ENCODE measurements at regions of chr9 and their contacts with region 1.

Region 1: GRCh38 chr9:69190086-69190862 is 16.2 kb downstream of the TJP2 start:
- DNase-seq: no peak
- ATAC-seq: no peak
- H3K4me3 ChIP-seq: no peak overlapping the region
- H3K4me3 Mint-ChIP-seq: peak overlapping the region in 1 of 10 donors; percentile 10
- H3K27ac ChIP-seq: no peak overlapping the region
- H3K27ac Mint-ChIP-seq: peak overlapping the region in 2 of 9 donors; percentile 67 to 72
- H3K4me1 ChIP-seq: peaks cover 0 to 8% of the 10 kb centered on the region in 2 donors
- H3K4me1 Mint-ChIP-seq: peaks cover 7 to 55% (median 23%) of the 10 kb centered on the region in 7 donors
- H3K27me3 ChIP-seq: no peaks in the 10 kb centered on the region
- H3K27me3 Mint-ChIP-seq: no peaks in the 10 kb centered on the region

Region 2: DNA sequence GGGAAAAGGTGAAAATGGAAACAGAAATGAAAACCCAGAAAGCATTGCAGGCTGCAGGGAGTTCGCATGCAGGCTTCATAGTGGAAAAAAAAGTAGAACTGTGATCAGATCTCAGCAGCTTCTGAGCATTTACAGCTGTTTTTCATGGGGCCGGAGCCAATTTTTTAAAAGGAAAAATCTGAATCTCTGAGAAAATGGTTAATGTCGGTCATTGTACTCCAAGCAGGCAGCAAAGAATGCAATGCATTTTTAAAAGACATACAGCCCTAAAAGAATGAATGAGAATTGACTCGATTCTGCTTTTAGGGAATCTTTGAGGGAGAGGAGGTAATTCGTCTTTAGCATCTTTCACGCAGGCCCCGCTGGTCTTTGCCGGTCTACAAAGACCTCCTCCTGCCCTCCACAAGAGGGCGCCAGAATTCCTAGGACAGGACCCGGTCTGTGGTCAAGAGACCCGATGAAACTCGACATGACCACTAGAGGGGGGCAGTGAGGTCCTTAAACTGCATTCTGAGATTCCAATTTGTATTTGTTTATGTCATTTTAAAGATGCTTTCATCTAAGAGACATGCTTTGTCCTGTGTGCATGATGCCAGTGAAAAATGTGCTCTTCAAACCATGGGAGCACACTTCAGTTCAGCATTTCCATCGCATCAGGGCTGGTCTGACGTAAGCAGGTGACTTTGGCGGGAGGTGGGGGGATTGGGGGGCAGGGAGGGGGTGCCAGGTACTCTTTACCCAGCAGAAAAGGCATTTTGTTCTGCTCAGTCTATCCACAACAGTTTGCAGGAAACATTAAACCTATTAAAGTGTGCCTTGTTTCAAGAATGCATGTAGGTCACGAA is 605.9 kb before region 1 on chr9:
- CTCF ChIA-PET with region 1: interaction called, 3 read pairs
- POLR2A ChIA-PET with region 1: no interaction called
- intact Hi-C with region 1: loop called (anchors 1 kb)
- DNase-seq: peak; percentile 64 to 89 (median 80)
- ATAC-seq: peak; percentile 100
- H3K4me3 ChIP-seq: no peak overlapping the region
- H3K4me3 Mint-ChIP-seq: no peak overlapping the region
- H3K27ac ChIP-seq: no peak overlapping the region
- H3K27ac Mint-ChIP-seq: peak overlapping the region in 1 of 9 donors; percentile 63
- H3K4me1 ChIP-seq: no peaks in the 10 kb centered on the region
- H3K4me1 Mint-ChIP-seq: peaks cover 0 to 5% (median 0%) of the 10 kb centered on the region in 7 donors
- H3K27me3 ChIP-seq: no peaks in the 10 kb centered on the region
- H3K27me3 Mint-ChIP-seq: peaks cover 0 to 14% (median 10%) of the 10 kb centered on the region in 5 donors

Region 3: GRCh38 chr9:69035438-69036308 is 154.6 kb before region 1 on chr9 and contains the start of gene FXN:
- CTCF ChIA-PET with region 1: interaction called, 21 read pairs
- POLR2A ChIA-PET with region 1: no interaction called
- intact Hi-C with region 1: loop called (anchors 1 kb)
- DNase-seq: peak; percentile 60 to 89 (median 81)
- ATAC-seq: peak; percentile 95
- H3K4me3 ChIP-seq: peak within 1 kb of the TSS; percentile 72
- H3K4me3 Mint-ChIP-seq: peak within 1 kb of the TSS; percentile 91 to 99 (median 97)
- H3K27ac ChIP-seq: peak within 1 kb of the TSS; percentile 73
- H3K27ac Mint-ChIP-seq: peak within 1 kb of the TSS; percentile 88 to 95 (median 91)
- H3K4me1 ChIP-seq: peaks cover 9 to 16% of the 10 kb centered on the region in 2 donors
- H3K4me1 Mint-ChIP-seq: peaks cover 14 to 73% (median 38%) of the 10 kb centered on the region in 7 donors
- H3K27me3 ChIP-seq: no peaks in the 10 kb centered on the region
- H3K27me3 Mint-ChIP-seq: no peaks in the 10 kb centered on the region
- total RNA-seq, gene FXN: 16.7 to 28.3 (median 19.1) TPM

Region 4: GRCh38 chr9:69056191-69056815 is 134.0 kb before region 1 on chr9:
- CTCF ChIA-PET with region 1: interaction called, 64 read pairs
- POLR2A ChIA-PET with region 1: interaction called, 3 read pairs
- intact Hi-C with region 1: loop called in 1 of 2 experiments (anchors 1 kb)
- DNase-seq: no peak
- ATAC-seq: no peak
- H3K4me3 ChIP-seq: no peak overlapping the region
- H3K4me3 Mint-ChIP-seq: peak overlapping the region in 1 of 10 donors; percentile 16
- H3K27ac ChIP-seq: no peak overlapping the region
- H3K27ac Mint-ChIP-seq: peak overlapping the region in 1 of 9 donors; percentile 68
- H3K4me1 ChIP-seq: no peaks in the 10 kb centered on the region
- H3K4me1 Mint-ChIP-seq: peaks cover 0 to 25% (median 6%) of the 10 kb centered on the region in 7 donors
- H3K27me3 ChIP-seq: no peaks in the 10 kb centered on the region
- H3K27me3 Mint-ChIP-seq: no peaks in the 10 kb centered on the region

Region 5: GRCh38 chr9:69121828-69122548 is 68.3 kb before region 1 on chr9:
- CTCF ChIA-PET with region 1: no interaction called
- POLR2A ChIA-PET with region 1: no interaction called
- intact Hi-C with region 1: loop called (anchors 2 to 5 kb)
- DNase-seq: peak; percentile 36 to 68 (median 56)
- ATAC-seq: peak; percentile 82
- H3K4me3 ChIP-seq: peak overlapping the region; percentile 81
- H3K4me3 Mint-ChIP-seq: peak overlapping the region; percentile 94 to 98 (median 98)
- H3K27ac ChIP-seq: peak overlapping the region; percentile 49
- H3K27ac Mint-ChIP-seq: peak overlapping the region; percentile 72 to 95 (median 85)
- H3K4me1 ChIP-seq: peaks cover 0 to 7% of the 10 kb centered on the region in 2 donors
- H3K4me1 Mint-ChIP-seq: peaks cover 0 to 19% (median 11%) of the 10 kb centered on the region in 7 donors
- H3K27me3 ChIP-seq: no peaks in the 10 kb centered on the region
- H3K27me3 Mint-ChIP-seq: peaks cover 0 to 14% (median 0%) of the 10 kb centered on the region in 5 donors

Region 6: GRCh38 chr9:69155341-69156030 is 34.8 kb before region 1 on chr9:
- CTCF ChIA-PET with region 1: no interaction called
- POLR2A ChIA-PET with region 1: no interaction called
- intact Hi-C with region 1: loop called in 1 of 2 experiments (anchors 5 kb)
- DNase-seq: no peak
- ATAC-seq: no peak
- H3K4me3 ChIP-seq: no peak overlapping the region
- H3K4me3 Mint-ChIP-seq: no peak overlapping the region
- H3K27ac ChIP-seq: no peak overlapping the region
- H3K27ac Mint-ChIP-seq: no peak overlapping the region
- H3K4me1 ChIP-seq: no peaks in the 10 kb centered on the region
- H3K4me1 Mint-ChIP-seq: peaks cover 0 to 4% (median 0%) of the 10 kb centered on the region in 7 donors
- H3K27me3 ChIP-seq: no peaks in the 10 kb centered on the region
- H3K27me3 Mint-ChIP-seq: no peaks in the 10 kb centered on the region

Region 7: GRCh38 chr9:69174616-69175463 is 15.4 kb before region 1 on chr9:
- CTCF ChIA-PET with region 1: interaction called, 3 read pairs
- POLR2A ChIA-PET with region 1: no interaction called
- intact Hi-C with region 1: loop called in 1 of 2 experiments (anchors 2 kb)
- DNase-seq: peak in 1 of 9 donors; percentile 69
- ATAC-seq: peak; percentile 57
- H3K4me3 ChIP-seq: peak overlapping the region; percentile 36
- H3K4me3 Mint-ChIP-seq: peak overlapping the region; percentile 76 to 92 (median 82)
- H3K27ac ChIP-seq: no peak overlapping the region
- H3K27ac Mint-ChIP-seq: peak overlapping the region in 1 of 9 donors; percentile 79
- H3K4me1 ChIP-seq: peaks cover 10 to 12% of the 10 kb centered on the region in 2 donors
- H3K4me1 Mint-ChIP-seq: peaks cover 25 to 60% (median 30%) of the 10 kb centered on the region in 7 donors
- H3K27me3 ChIP-seq: no peaks in the 10 kb centered on the region
- H3K27me3 Mint-ChIP-seq: peaks cover 15 to 43% (median 24%) of the 10 kb centered on the region in 5 donors